PC-3 (cell line): ENCODE measurements at regions of chr14 and their contacts with region 1.

Region 1: GRCh38 chr14:52391881-52392615 is 77.9 kb downstream of the PTGER2 start:
- DNase-seq: peak; percentile 98
- ATAC-seq: peak; percentile 91
- H3K4me3 ChIP-seq: peak overlapping the region; percentile 26; the same call in 1 of the 2 replicates
- H3K27ac ChIP-seq: peak overlapping the region; percentile 77
- H3K4me1 ChIP-seq: peaks cover 24% of the 10 kb centered on the region
- H3K27me3 ChIP-seq: no peaks in the 10 kb centered on the region
- CTCF ChIP-seq: no peak

Region 2: GRCh38 chr14:52175982-52176502 is 216.0 kb before region 1 on chr14:
- CTCF ChIA-PET with region 1: no interaction called
- POLR2A ChIA-PET with region 1: no interaction called
- intact Hi-C with region 1: no loop called
- DNase-seq: no peak
- ATAC-seq: no peak
- H3K4me3 ChIP-seq: no peak overlapping the region
- H3K27ac ChIP-seq: no peak overlapping the region
- H3K4me1 ChIP-seq: no peaks in the 10 kb centered on the region
- H3K27me3 ChIP-seq: no peaks in the 10 kb centered on the region
- CTCF ChIP-seq: no peak

Region 3: DNA sequence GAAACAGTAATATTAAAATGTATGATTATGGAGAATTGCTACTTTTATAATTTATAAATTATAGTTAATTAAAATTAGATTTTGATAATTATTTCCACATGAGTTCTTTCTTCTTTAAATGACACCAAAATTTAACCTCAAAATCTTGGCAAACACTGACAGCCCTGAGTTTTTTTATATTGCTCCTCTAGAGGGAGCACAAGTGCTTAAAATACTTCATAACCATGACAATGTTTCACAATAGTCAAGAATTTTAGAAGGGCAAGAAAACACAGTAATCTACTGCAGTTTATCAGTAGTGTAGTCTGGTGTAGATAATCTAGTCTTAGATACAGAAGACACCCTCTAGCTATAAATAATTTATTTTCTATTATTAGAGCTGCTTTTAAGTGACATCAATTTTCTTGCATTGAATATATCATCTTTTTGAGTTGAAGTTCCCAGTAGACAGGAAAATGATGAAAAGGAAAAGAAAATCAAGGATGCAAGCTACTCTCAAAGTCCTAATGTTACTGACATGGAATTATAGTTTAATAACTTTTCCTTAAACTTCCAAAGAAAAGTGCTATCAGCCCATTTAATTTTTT is 92.3 kb before region 1 on chr14:
- CTCF ChIA-PET with region 1: no interaction called
- POLR2A ChIA-PET with region 1: interaction called, 14 read pairs
- intact Hi-C with region 1: loop called (anchors 5 kb)
- DNase-seq: peak; percentile 80
- ATAC-seq: peak; percentile 72
- H3K4me3 ChIP-seq: no peak overlapping the region
- H3K27ac ChIP-seq: no peak overlapping the region
- H3K4me1 ChIP-seq: no peaks in the 10 kb centered on the region
- H3K27me3 ChIP-seq: no peaks in the 10 kb centered on the region
- CTCF ChIP-seq: peak; percentile 83

Region 4: GRCh38 chr14:52369305-52369801 is 22.7 kb before region 1 on chr14:
- CTCF ChIA-PET with region 1: no interaction called
- POLR2A ChIA-PET with region 1: no interaction called
- intact Hi-C with region 1: loop called (anchors 2 kb)
- DNase-seq: peak; percentile 40
- ATAC-seq: peak; percentile 58
- H3K4me3 ChIP-seq: no peak overlapping the region
- H3K27ac ChIP-seq: no peak overlapping the region
- H3K4me1 ChIP-seq: peaks cover 23% of the 10 kb centered on the region
- H3K27me3 ChIP-seq: no peaks in the 10 kb centered on the region
- CTCF ChIP-seq: no peak

Region 5: GRCh38 chr14:52455291-52456088 is 63.4 kb after region 1 on chr14:
- CTCF ChIA-PET with region 1: no interaction called
- POLR2A ChIA-PET with region 1: no interaction called
- intact Hi-C with region 1: loop called (anchors 1 kb)
- DNase-seq: peak; percentile 70
- ATAC-seq: no peak
- H3K4me3 ChIP-seq: no peak overlapping the region
- H3K27ac ChIP-seq: peak overlapping the region; percentile 4; the same call in 1 of the 2 replicates
- H3K4me1 ChIP-seq: peaks cover 40% of the 10 kb centered on the region
- H3K27me3 ChIP-seq: no peaks in the 10 kb centered on the region
- CTCF ChIP-seq: no peak

Region 6: GRCh38 chr14:52467515-52468266 is 75.6 kb after region 1 on chr14:
- CTCF ChIA-PET with region 1: no interaction called
- POLR2A ChIA-PET with region 1: no interaction called
- intact Hi-C with region 1: loop called (anchors 1 kb)
- DNase-seq: no peak
- ATAC-seq: no peak
- H3K4me3 ChIP-seq: no peak overlapping the region
- H3K27ac ChIP-seq: no peak overlapping the region
- H3K4me1 ChIP-seq: no peaks in the 10 kb centered on the region
- H3K27me3 ChIP-seq: no peaks in the 10 kb centered on the region
- CTCF ChIP-seq: no peak

Region 7: GRCh38 chr14:52948039-52948438 is 556.0 kb after region 1 on chr14:
- CTCF ChIA-PET with region 1: no interaction called
- POLR2A ChIA-PET with region 1: no interaction called
- intact Hi-C with region 1: no loop called
- DNase-seq: no peak
- ATAC-seq: no peak
- H3K4me3 ChIP-seq: peak overlapping the region; percentile 82; the same call in 1 of the 2 replicates
- H3K27ac ChIP-seq: no peak overlapping the region
- H3K4me1 ChIP-seq: peaks cover 25% of the 10 kb centered on the region
- H3K27me3 ChIP-seq: no peaks in the 10 kb centered on the region
- CTCF ChIP-seq: no peak